ENCODE measurements at regions of chr17 and their contacts with region 1.

Region 1: GRCh38 chr17:13843862-13844635 is 225.3 kb upstream of the COX10 start:
- DNase-seq: no peak
- ATAC-seq: no peak
- H3K4me3 ChIP-seq: no peak overlapping the region
- H3K4me3 Mint-ChIP-seq: no peak overlapping the region
- H3K27ac ChIP-seq: no peak overlapping the region
- H3K27ac Mint-ChIP-seq: no peak overlapping the region
- H3K4me1 ChIP-seq: no peaks in the 10 kb centered on the region
- H3K4me1 Mint-ChIP-seq: no peaks in the 10 kb centered on the region
- H3K27me3 ChIP-seq: no peaks in the 10 kb centered on the region
- H3K27me3 Mint-ChIP-seq: no peaks in the 10 kb centered on the region
- CTCF ChIP-seq: no peak

Region 2: GRCh38 chr17:13129356-13129755 is 714.7 kb before region 1 on chr17:
- intact Hi-C with region 1: loop called (anchors 10 kb)
- DNase-seq: no peak
- ATAC-seq: no peak
- H3K4me3 ChIP-seq: no peak overlapping the region
- H3K4me3 Mint-ChIP-seq: no peak overlapping the region
- H3K27ac ChIP-seq: no peak overlapping the region
- H3K27ac Mint-ChIP-seq: no peak overlapping the region
- H3K4me1 ChIP-seq: no peaks in the 10 kb centered on the region
- H3K4me1 Mint-ChIP-seq: no peaks in the 10 kb centered on the region
- H3K27me3 ChIP-seq: no peaks in the 10 kb centered on the region
- H3K27me3 Mint-ChIP-seq: no peaks in the 10 kb centered on the region
- CTCF ChIP-seq: no peak

Region 3: DNA sequence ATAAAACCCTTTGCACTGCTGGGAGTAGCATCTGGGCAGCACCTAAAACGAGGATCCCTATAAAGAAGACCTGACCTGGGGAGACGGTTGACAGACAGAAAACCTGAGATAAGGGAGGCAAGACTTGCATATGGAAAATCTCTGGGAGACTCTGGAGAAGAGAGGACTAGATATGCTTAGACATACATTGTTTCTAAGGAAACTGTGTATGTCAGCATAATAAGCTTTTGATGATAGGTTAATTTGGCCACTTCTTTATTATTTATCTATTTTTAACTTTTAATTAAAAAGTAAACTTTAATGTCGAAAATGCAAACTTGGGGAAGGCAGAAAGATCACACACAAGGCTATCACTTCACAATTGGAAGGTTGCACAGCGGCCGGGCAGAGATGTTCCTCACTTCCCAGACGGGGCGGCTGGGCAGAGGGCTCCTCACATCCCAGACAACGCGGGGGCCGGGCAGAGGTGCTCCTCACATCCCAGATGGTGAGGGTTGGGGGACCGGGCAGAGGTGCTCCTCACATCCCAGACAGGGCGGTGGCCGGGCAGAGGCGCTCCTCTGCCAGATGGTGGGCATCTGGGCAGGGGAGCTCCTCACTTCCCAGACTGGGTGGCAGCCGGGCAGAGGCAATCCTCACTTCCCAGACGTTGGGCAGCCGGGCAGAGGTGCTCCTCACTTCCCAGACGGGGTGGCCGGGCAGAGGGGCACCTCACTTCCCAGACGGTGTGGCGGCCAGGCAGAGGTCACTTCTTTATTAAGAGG is 178.0 kb before region 1 on chr17:
- intact Hi-C with region 1: no loop called
- DNase-seq: no peak
- ATAC-seq: no peak
- H3K4me3 ChIP-seq: no peak overlapping the region
- H3K4me3 Mint-ChIP-seq: no peak overlapping the region
- H3K27ac ChIP-seq: no peak overlapping the region
- H3K27ac Mint-ChIP-seq: no peak overlapping the region
- H3K4me1 ChIP-seq: no peaks in the 10 kb centered on the region
- H3K4me1 Mint-ChIP-seq: no peaks in the 10 kb centered on the region
- H3K27me3 ChIP-seq: peaks cover 2% of the 10 kb centered on the region
- H3K27me3 Mint-ChIP-seq: peaks cover 15 to 21% of the 10 kb centered on the region in 2 donors
- CTCF ChIP-seq: no peak

Region 4: GRCh38 chr17:13813347-13814240 is 30.5 kb before region 1 on chr17:
- intact Hi-C with region 1: no loop called
- DNase-seq: no peak
- ATAC-seq: no peak
- H3K4me3 ChIP-seq: no peak overlapping the region
- H3K4me3 Mint-ChIP-seq: no peak overlapping the region
- H3K27ac ChIP-seq: no peak overlapping the region
- H3K27ac Mint-ChIP-seq: no peak overlapping the region
- H3K4me1 ChIP-seq: no peaks in the 10 kb centered on the region
- H3K4me1 Mint-ChIP-seq: no peaks in the 10 kb centered on the region
- H3K27me3 ChIP-seq: no peaks in the 10 kb centered on the region
- H3K27me3 Mint-ChIP-seq: no peaks in the 10 kb centered on the region
- CTCF ChIP-seq: no peak

Region 5: DNA sequence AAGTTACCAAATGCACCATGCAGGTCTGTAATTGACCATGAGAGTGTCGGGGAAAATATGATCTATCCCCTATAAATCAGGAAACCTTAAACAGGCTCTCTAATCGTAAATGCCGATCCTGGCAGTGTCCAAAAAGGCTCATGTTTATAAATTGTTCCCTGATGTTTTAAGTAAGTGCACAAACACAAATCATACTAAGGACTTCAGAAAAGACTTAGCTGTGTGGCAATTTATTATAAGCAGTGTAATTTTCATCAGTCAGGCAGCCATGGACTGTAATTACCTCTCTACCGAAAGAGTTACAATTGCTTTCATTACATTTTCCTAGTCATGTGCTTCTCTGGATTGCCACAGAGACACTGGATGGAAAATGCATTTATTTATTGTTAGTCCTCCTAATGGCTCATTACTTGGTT is 151.8 kb after region 1 on chr17:
- intact Hi-C with region 1: no loop called
- DNase-seq: no peak
- ATAC-seq: no peak
- H3K4me3 ChIP-seq: no peak overlapping the region
- H3K4me3 Mint-ChIP-seq: no peak overlapping the region
- H3K27ac ChIP-seq: no peak overlapping the region
- H3K27ac Mint-ChIP-seq: no peak overlapping the region
- H3K4me1 ChIP-seq: no peaks in the 10 kb centered on the region
- H3K4me1 Mint-ChIP-seq: no peaks in the 10 kb centered on the region
- H3K27me3 ChIP-seq: no peaks in the 10 kb centered on the region
- H3K27me3 Mint-ChIP-seq: no peaks in the 10 kb centered on the region
- CTCF ChIP-seq: no peak

Region 6: DNA sequence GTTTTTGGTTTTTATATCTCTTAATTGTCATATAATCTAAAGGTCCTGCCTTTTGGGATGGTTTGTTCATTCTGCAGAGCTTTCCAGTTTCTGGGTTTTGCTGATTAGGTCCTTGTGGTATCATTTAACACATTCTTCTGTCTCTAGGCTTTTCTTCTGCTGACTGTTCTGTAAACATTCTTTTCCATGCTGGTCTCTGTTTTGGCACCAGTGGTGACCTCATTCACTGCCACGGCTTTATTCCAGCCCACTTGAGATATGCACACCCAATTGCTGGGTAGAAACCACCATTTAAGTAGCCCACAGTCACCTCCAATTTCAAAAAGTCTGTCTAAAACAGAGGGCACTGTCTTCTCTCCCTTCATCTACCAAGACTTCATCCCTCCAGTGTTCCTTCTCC is 194.2 kb after region 1 on chr17:
- intact Hi-C with region 1: no loop called
- DNase-seq: no peak
- ATAC-seq: no peak
- H3K4me3 ChIP-seq: no peak overlapping the region
- H3K4me3 Mint-ChIP-seq: no peak overlapping the region
- H3K27ac ChIP-seq: no peak overlapping the region
- H3K27ac Mint-ChIP-seq: no peak overlapping the region
- H3K4me1 ChIP-seq: no peaks in the 10 kb centered on the region
- H3K4me1 Mint-ChIP-seq: peaks cover 23 to 29% of the 10 kb centered on the region in 2 donors
- H3K27me3 ChIP-seq: no peaks in the 10 kb centered on the region
- H3K27me3 Mint-ChIP-seq: no peaks in the 10 kb centered on the region
- CTCF ChIP-seq: no peak

Measured in natural killer cell (primary cell).